PC-9 (cell line): ENCODE measurements at regions of chr9 and their contacts with region 1.

Region 1: GRCh38 chr9:88777498-88778312 is 213.6 kb upstream of the S1PR3 start:
- DNase-seq: no peak
- H3K4me3 ChIP-seq: no peak overlapping the region
- H3K27ac ChIP-seq: peak overlapping the region; percentile 98
- H3K4me1 ChIP-seq: peaks cover 53% of the 10 kb centered on the region
- H3K27me3 ChIP-seq: no peaks in the 10 kb centered on the region
- CTCF ChIP-seq: no peak

Region 2: DNA sequence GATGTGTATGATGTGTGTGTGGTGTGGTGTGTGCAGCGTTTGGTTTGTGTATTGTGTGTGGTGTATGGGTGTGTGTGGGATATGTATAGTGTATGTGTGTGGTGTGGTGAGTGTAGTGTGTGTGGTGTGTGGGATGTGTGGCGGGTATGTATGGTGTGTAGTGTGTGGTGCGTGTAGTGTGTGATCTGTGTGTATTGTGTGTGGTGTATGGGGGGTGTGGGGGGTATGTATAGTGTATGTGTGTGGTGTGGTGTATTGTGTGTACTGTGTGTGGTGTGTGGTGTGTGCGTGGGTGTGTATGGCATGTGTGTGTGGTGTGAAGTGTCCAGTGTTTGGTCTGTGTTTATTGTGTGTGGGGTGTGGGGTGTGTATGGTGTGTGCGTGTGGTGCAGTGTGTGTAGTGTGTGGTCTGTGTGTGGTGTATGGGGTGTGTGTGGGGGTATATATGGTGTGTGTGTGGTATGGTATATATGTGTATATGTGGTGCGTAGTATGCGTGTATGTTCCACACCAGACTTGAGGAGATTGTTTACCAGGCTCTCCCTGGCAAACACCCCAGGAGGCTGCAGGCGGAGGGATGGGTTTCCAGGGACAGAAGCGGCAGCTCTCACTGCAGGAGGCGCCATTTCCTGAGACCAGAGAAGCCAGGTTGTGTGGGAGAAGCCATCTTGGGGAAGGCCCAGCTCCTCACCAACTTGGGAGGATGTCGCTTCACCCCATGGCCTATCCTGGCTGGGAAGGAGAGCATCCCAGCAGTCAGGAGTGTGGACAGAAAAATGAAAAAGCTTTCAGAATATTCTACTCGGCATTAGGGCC is 104.6 kb before region 1 on chr9:
- CTCF ChIA-PET with region 1: no interaction called
- POLR2A ChIA-PET with region 1: no interaction called
- intact Hi-C with region 1: no loop called
- DNase-seq: no peak
- H3K4me3 ChIP-seq: no peak overlapping the region
- H3K27ac ChIP-seq: no peak overlapping the region
- H3K4me1 ChIP-seq: no peaks in the 10 kb centered on the region
- H3K27me3 ChIP-seq: no peaks in the 10 kb centered on the region
- CTCF ChIP-seq: no peak

Region 3: DNA sequence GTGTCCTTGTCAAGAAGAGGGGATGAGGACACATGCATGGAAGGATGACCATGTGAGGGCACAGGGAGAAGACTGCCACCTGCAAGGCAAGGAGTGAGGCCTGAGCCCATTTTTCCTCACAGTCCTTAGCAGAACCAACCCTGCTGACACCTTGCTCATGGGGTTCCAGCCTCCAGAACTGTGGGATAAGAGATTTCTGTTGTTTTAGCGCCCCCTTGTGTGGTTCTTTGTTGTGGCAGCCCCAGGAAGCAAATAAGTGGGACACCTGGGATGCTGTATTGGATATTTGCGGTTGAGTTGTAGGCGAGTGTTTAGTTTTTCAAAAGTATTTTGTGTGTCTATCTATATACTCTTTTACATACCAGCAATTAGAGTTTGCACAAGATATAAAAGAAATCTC is 36.4 kb before region 1 on chr9:
- CTCF ChIA-PET with region 1: no interaction called
- POLR2A ChIA-PET with region 1: no interaction called
- intact Hi-C with region 1: no loop called
- DNase-seq: no peak
- H3K4me3 ChIP-seq: no peak overlapping the region
- H3K27ac ChIP-seq: no peak overlapping the region
- H3K4me1 ChIP-seq: no peaks in the 10 kb centered on the region
- H3K27me3 ChIP-seq: no peaks in the 10 kb centered on the region
- CTCF ChIP-seq: peak; percentile 44

Region 4: DNA sequence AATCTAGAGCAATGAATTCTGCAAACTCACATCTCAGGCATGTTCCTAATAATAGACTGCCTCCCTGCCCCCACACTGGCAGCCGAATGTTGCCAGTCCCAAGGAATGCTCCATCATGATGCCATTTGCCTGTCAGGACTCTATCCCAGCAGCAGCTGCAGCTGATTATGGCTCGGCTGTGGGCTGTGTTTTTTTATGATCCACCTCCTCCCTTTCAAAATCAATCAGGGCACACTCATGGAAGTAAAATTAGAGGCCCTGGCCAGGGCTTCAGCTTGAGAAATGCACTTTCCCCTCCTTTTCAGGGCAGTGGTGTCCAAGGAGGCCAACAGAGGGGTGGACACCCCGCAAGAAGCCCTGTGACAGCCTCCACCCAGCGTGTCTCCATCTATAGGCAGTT is 36.9 kb after region 1 on chr9:
- CTCF ChIA-PET with region 1: no interaction called
- POLR2A ChIA-PET with region 1: no interaction called
- intact Hi-C with region 1: loop called (anchors 5 kb)
- DNase-seq: no peak
- H3K4me3 ChIP-seq: no peak overlapping the region
- H3K27ac ChIP-seq: no peak overlapping the region
- H3K4me1 ChIP-seq: no peaks in the 10 kb centered on the region; the same call in 1 of the 2 replicates
- H3K27me3 ChIP-seq: no peaks in the 10 kb centered on the region
- CTCF ChIP-seq: no peak

Region 5: DNA sequence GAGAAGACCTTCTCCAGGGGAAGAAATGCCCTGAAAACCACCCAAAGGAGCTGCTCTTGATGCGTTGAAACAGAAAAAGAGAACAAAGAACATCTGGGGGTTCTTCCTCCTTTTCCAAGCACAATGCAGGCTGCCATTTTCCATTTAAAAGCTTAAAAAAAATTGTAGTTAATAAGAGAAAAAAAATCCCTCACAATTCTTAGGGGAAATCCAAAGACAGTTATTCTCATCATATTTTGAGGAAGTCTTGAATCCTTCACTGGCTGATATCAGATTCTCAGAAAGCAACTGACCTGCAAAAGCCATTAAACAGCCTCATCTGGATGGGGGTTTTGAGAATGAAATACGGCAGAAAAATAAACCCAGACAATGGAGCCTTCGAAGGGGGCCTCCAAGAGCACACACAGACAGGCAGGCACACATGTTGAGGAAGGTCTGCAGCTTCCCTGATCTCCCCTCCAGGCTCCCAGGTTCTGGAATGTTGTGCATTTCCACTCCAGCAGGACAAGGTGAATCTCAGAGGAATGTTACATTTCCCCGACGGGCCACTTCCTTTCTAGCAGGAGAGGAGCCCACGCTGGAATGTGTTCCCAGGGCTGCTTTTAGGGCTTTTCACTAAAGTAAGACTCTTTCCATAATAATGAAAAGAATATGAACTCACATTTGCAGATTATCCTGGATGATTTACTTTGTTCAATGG is 54.2 kb after region 1 on chr9:
- CTCF ChIA-PET with region 1: no interaction called
- POLR2A ChIA-PET with region 1: no interaction called
- intact Hi-C with region 1: loop called (anchors 5 kb)
- DNase-seq: no peak
- H3K4me3 ChIP-seq: no peak overlapping the region
- H3K27ac ChIP-seq: no peak overlapping the region
- H3K4me1 ChIP-seq: peaks cover 11% of the 10 kb centered on the region
- H3K27me3 ChIP-seq: no peaks in the 10 kb centered on the region
- CTCF ChIP-seq: no peak

Region 6: DNA sequence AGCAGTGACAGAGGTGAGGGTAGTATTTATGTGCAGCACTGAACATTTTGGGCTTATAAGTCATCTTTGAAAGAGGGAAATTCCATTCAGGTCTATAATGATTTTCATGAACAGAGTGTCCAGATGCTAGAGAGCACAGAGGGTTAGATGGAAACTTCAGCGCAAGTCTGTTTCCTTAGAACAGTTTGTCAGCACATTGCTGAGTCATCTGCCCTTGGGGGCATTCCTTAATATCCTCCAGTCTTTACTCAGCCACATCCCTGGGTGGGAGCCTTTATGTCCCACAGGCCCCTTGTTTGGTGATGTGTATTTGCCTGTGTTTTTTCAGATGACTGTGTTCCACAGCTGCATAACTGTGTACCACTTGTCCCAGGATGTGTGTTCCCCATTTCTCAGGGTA is 75.1 kb after region 1 on chr9:
- CTCF ChIA-PET with region 1: interaction called, 12 read pairs
- POLR2A ChIA-PET with region 1: no interaction called
- intact Hi-C with region 1: no loop called
- DNase-seq: peak; percentile 75 to 84
- H3K4me3 ChIP-seq: no peak overlapping the region
- H3K27ac ChIP-seq: peak overlapping the region; percentile 51
- H3K4me1 ChIP-seq: peaks cover 15% of the 10 kb centered on the region
- H3K27me3 ChIP-seq: no peaks in the 10 kb centered on the region
- CTCF ChIP-seq: no peak

Region 7: GRCh38 chr9:88880205-88880604 is 102.5 kb after region 1 on chr9:
- CTCF ChIA-PET with region 1: no interaction called
- POLR2A ChIA-PET with region 1: no interaction called
- intact Hi-C with region 1: loop called (anchors 2 kb)
- DNase-seq: peak; percentile 77 to 85
- H3K4me3 ChIP-seq: no peak overlapping the region
- H3K27ac ChIP-seq: no peak overlapping the region
- H3K4me1 ChIP-seq: peaks cover 6% of the 10 kb centered on the region; the same call in 1 of the 2 replicates
- H3K27me3 ChIP-seq: no peaks in the 10 kb centered on the region
- CTCF ChIP-seq: no peak

Region 8: GRCh38 chr9:88942411-88942810 is 164.7 kb after region 1 on chr9:
- CTCF ChIA-PET with region 1: no interaction called
- POLR2A ChIA-PET with region 1: no interaction called
- intact Hi-C with region 1: loop called (anchors 5 kb)
- DNase-seq: peak in 1 of 2 experiments; percentile 72
- H3K4me3 ChIP-seq: no peak overlapping the region
- H3K27ac ChIP-seq: peak overlapping the region; percentile 72
- H3K4me1 ChIP-seq: peaks cover 77% of the 10 kb centered on the region
- H3K27me3 ChIP-seq: no peaks in the 10 kb centered on the region
- CTCF ChIP-seq: no peak

Region 9: GRCh38 chr9:89137542-89138462 is 360.1 kb after region 1 on chr9:
- CTCF ChIA-PET with region 1: no interaction called
- POLR2A ChIA-PET with region 1: no interaction called
- intact Hi-C with region 1: loop called (anchors 2 kb)
- DNase-seq: peak; percentile 80
- H3K4me3 ChIP-seq: no peak overlapping the region
- H3K27ac ChIP-seq: peak overlapping the region; percentile 64
- H3K4me1 ChIP-seq: peaks cover 37% of the 10 kb centered on the region
- H3K27me3 ChIP-seq: no peaks in the 10 kb centered on the region
- CTCF ChIP-seq: no peak